CD14-positive monocyte (primary cell): ENCODE measurements at regions of chr22 and their contacts with region 1.

Region 1: DNA sequence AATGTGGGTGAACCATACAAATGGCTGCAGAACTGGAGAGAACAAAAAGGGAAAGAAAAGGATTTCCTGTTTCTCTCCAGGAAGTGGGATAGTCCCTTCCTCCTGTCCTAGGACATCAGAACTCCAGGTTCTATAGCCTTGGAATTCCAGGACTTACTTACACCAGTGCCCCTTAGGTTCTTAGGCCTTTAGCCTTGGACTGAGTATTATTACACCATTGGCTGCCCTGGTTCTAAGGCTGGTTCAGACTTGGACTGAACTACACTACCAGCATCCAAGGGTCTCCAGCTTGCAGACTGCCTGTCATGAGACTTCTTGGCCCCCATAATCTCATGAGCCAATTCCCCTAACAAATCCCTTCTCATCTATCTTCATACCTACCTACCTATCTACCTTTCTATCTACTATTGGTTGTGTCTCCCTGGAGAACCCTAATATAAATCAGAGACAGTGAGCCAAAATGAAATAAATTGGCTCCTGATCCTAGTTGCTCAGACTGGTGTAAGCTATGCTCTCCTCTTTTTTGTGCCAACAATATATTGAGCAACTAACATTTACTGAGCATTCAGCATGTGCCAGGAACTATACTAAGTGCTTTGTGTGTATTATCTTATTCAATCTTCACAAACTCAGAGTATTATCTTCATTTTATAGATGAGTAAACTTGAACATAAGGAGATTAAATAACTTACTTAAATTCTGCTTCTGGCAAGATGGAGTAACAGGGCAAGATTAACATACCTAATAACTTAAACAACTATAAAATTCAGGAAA is 303.7 kb downstream of the TTC28 start:
- DNase-seq: no peak
- H3K4me3 ChIP-seq: no peak overlapping the region
- H3K4me3 Mint-ChIP-seq: no peak overlapping the region
- H3K27ac ChIP-seq: no peak overlapping the region
- H3K27ac Mint-ChIP-seq: no peak overlapping the region
- H3K4me1 ChIP-seq: peaks cover 39 to 46% of the 10 kb centered on the region in 2 donors
- H3K4me1 Mint-ChIP-seq: peaks cover 65% of the 10 kb centered on the region
- H3K27me3 ChIP-seq: no peaks in the 10 kb centered on the region
- H3K27me3 Mint-ChIP-seq: peaks cover 0 to 2% (median 1%) of the 10 kb centered on the region in 3 donors
- CTCF ChIP-seq: no peak

Region 2: GRCh38 chr22:28279888-28280287 is 96.1 kb before region 1 on chr22:
- intact Hi-C with region 1: no loop called
- DNase-seq: no peak
- H3K4me3 ChIP-seq: no peak overlapping the region
- H3K4me3 Mint-ChIP-seq: no peak overlapping the region
- H3K27ac ChIP-seq: no peak overlapping the region
- H3K27ac Mint-ChIP-seq: no peak overlapping the region
- H3K4me1 ChIP-seq: peaks cover 0 to 8% of the 10 kb centered on the region in 2 donors
- H3K4me1 Mint-ChIP-seq: peaks cover 18% of the 10 kb centered on the region
- H3K27me3 ChIP-seq: no peaks in the 10 kb centered on the region
- H3K27me3 Mint-ChIP-seq: no peaks in the 10 kb centered on the region
- CTCF ChIP-seq: no peak

Region 3: DNA sequence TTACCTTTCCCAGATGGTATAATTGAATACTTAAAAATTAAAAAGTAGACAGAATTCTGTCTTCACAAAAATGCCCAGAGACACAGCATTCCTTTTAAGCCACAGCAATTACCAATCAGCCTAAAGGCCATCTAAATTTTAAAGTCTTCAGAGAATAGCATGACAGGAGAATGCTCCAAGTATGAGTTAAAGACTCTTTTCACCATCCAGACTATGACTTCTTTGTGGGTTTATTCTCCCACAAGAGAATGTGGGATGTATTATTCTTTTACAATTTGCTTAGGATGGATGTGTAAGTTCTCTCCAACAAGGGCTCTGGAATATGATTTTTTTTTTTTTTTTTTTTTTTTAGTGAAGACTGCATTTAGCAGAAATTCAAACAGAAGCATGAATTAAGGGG is 53.8 kb after region 1 on chr22:
- intact Hi-C with region 1: loop called in 1 of 2 experiments (anchors 5 kb)
- DNase-seq: no peak
- H3K4me3 ChIP-seq: no peak overlapping the region
- H3K4me3 Mint-ChIP-seq: no peak overlapping the region
- H3K27ac ChIP-seq: no peak overlapping the region
- H3K27ac Mint-ChIP-seq: no peak overlapping the region
- H3K4me1 ChIP-seq: no peaks in the 10 kb centered on the region
- H3K4me1 Mint-ChIP-seq: no peaks in the 10 kb centered on the region
- H3K27me3 ChIP-seq: no peaks in the 10 kb centered on the region
- H3K27me3 Mint-ChIP-seq: peaks cover 0 to 6% (median 0%) of the 10 kb centered on the region in 3 donors
- CTCF ChIP-seq: no peak